ENCODE measurements at regions of chr7 and their contacts with region 1.

Region 1: DNA sequence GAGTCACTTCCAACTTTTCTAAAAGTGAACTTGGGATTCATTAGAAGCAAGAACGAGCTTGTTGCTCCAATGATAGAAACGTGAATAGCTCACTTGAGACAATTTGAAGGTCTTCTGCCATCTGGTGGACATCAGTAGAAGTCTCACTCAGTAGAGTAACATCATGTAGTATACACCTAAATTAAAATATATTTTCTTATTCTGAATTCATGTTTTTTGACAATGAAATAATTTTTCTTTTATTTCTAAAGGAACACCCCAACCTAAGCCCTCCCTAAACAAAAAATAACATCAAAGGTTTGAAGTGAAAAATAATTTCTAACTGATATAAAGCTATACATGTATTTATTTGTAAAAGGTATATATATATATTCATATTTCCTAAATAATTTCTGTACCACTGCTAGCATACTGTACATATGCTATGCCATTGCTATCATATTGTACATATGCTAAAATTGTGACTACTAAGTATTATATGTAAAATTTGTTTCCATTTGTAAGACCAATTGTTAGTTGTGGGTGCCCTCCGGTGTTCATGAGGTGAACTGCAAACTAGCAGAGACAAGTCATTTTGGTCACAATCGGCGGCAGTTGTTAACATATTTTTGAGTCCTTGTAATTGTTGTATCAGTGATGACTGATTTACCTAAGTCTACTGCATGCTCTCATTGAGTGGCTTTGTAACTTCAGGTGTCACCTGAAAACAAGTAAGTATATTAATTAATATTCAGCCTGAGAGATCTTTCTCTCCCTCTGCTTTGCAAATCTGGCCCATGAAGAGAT is 121.9 kb downstream of the PTPRZ1 start:
- DNase-seq: peak; percentile 82
- H3K4me3 Mint-ChIP-seq: no peak overlapping the region
- H3K27ac Mint-ChIP-seq: no peak overlapping the region
- H3K4me1 Mint-ChIP-seq: no peaks in the 10 kb centered on the region
- H3K27me3 Mint-ChIP-seq: no peaks in the 10 kb centered on the region

Region 2: GRCh38 chr7:121107923-121108498 is 886.8 kb before region 1 on chr7:
- intact Hi-C with region 1: loop called (anchors 10 kb)
- DNase-seq: peak; percentile 64
- H3K4me3 Mint-ChIP-seq: no peak overlapping the region
- H3K27ac Mint-ChIP-seq: no peak overlapping the region
- H3K4me1 Mint-ChIP-seq: no peaks in the 10 kb centered on the region
- H3K27me3 Mint-ChIP-seq: peaks cover 28% of the 10 kb centered on the region

Region 3: GRCh38 chr7:121329191-121330052 is 665.4 kb before region 1 on chr7:
- intact Hi-C with region 1: loop called (anchors 10 kb)
- DNase-seq: peak; percentile 73
- H3K4me3 Mint-ChIP-seq: peak overlapping the region; percentile 71
- H3K27ac Mint-ChIP-seq: no peak overlapping the region
- H3K4me1 Mint-ChIP-seq: peaks cover 9% of the 10 kb centered on the region
- H3K27me3 Mint-ChIP-seq: peaks cover 63% of the 10 kb centered on the region

Region 4: DNA sequence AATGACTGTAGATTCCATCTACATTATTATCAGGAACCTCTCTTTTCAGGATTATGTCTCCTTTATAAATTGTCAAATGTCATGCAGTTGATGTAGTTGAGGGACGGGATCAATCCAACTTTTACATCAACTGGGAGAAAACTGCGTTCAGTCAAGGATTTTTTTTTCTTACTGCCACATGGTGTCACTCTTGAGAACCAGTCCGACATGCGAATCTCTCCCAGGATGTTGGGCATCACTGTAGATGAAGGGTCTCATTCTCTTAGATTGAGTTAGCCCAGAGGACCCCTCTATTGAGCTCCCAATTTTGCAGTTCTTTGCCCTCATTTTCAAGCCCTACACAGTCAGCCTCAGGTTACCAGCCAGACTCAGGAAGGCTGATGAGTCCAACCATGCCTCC is 242.1 kb before region 1 on chr7:
- intact Hi-C with region 1: loop called (anchors 5 kb)
- DNase-seq: no peak
- H3K4me3 Mint-ChIP-seq: no peak overlapping the region
- H3K27ac Mint-ChIP-seq: no peak overlapping the region
- H3K4me1 Mint-ChIP-seq: no peaks in the 10 kb centered on the region
- H3K27me3 Mint-ChIP-seq: no peaks in the 10 kb centered on the region

Region 5: DNA sequence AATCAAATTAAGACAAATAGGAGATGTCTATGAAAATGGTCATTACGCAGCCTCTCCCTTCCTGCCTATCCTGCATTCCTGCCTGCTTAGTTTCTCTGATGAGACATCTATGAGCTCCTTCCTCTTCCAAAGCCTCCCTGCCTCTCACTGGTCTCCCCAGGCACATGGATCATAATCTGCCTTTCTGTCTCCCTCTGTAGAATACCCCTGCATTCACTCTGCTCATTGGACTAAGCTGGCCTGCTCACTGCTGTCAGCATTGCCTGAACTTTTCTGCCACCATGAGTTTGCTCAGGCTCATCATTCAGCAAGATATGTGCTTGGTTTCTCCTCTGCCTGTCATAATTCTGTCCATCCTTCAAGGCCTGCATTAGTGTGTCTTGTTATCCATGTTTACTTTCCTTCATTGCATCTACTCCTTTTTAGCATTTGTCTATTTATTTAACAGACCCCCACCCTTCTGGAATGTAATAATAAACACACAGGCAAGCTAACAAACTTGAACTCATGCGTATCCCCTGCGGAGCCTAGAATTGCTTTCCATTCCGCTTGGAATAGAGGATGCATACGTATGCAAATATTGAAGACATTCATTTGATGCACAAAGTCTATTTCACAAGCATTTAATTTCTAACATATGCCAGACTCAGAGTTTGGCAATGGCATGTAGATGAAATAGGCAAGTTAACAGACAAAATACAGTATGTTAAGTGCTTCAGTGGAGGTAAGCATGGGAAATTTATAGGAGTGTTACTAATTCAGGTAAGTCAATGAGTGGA is 33.5 kb before region 1 on chr7:
- intact Hi-C with region 1: no loop called
- DNase-seq: no peak
- H3K4me3 Mint-ChIP-seq: no peak overlapping the region
- H3K27ac Mint-ChIP-seq: no peak overlapping the region
- H3K4me1 Mint-ChIP-seq: no peaks in the 10 kb centered on the region
- H3K27me3 Mint-ChIP-seq: no peaks in the 10 kb centered on the region

Region 6: GRCh38 chr7:122013071-122013470 is 18.3 kb after region 1 on chr7:
- intact Hi-C with region 1: no loop called
- DNase-seq: no peak
- H3K4me3 Mint-ChIP-seq: no peak overlapping the region
- H3K27ac Mint-ChIP-seq: peak overlapping the region; percentile 3
- H3K4me1 Mint-ChIP-seq: no peaks in the 10 kb centered on the region
- H3K27me3 Mint-ChIP-seq: no peaks in the 10 kb centered on the region

Region 7: GRCh38 chr7:122155566-122155965 is 160.7 kb after region 1 on chr7:
- intact Hi-C with region 1: no loop called
- DNase-seq: no peak
- H3K4me3 Mint-ChIP-seq: no peak overlapping the region
- H3K27ac Mint-ChIP-seq: no peak overlapping the region
- H3K4me1 Mint-ChIP-seq: no peaks in the 10 kb centered on the region
- H3K27me3 Mint-ChIP-seq: no peaks in the 10 kb centered on the region

Measured in activated CD4-positive, alpha-beta T cell treated with anti-CD3 and anti-CD28 coated beads, Interleukin-2, amount 10 ng/mL, durations not matched to agents 24 days and 14 days (primary cell).